MCF 10A (cell line): ENCODE measurements at regions of chr4 and their contacts with region 1.

Region 1: DNA sequence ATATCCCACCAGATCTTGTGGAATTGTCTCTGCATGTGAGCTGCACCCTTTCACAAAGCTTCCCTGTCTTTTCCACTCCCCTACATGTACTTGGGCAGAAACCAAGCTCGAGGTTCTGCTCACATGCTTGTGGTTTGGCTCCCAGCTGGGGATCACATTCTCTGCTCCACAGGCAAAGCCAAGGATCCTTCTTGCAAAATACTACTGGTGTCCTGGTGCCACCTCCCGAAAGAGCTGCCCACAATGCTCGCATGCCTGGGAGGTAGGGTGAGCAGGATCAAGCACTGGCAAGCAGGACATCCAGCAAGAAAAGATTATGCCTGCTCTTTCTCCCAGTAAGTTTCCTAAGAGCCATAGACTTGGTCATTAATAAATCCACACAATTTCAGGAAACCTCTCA is 45.1 kb upstream of the PPARGC1A start:
- DNase-seq: peak; percentile 96
- H3K4me3 Mint-ChIP-seq: peak overlapping the region; percentile 46
- H3K27ac Mint-ChIP-seq: peak overlapping the region; percentile 57
- H3K4me1 Mint-ChIP-seq: peaks cover 57% of the 10 kb centered on the region
- H3K27me3 Mint-ChIP-seq: no peaks in the 10 kb centered on the region
- CTCF ChIP-seq: no peak

Region 2: GRCh38 chr4:23717528-23718248 is 217.2 kb before region 1 on chr4:
- CTCF ChIA-PET with region 1: no interaction called
- POLR2A ChIA-PET with region 1: no interaction called
- intact Hi-C with region 1: no loop called
- DNase-seq: peak; percentile 34
- H3K4me3 Mint-ChIP-seq: no peak overlapping the region
- H3K27ac Mint-ChIP-seq: no peak overlapping the region
- H3K4me1 Mint-ChIP-seq: no peaks in the 10 kb centered on the region
- H3K27me3 Mint-ChIP-seq: no peaks in the 10 kb centered on the region
- CTCF ChIP-seq: peak; percentile 23

Region 3: GRCh38 chr4:23857367-23857959 is 77.5 kb before region 1 on chr4:
- CTCF ChIA-PET with region 1: interaction called, 11 read pairs
- POLR2A ChIA-PET with region 1: interaction called, 5 read pairs
- intact Hi-C with region 1: loop called (anchors 2 kb)
- DNase-seq: peak; percentile 24
- H3K4me3 Mint-ChIP-seq: no peak overlapping the region
- H3K27ac Mint-ChIP-seq: no peak overlapping the region
- H3K4me1 Mint-ChIP-seq: peaks cover 13% of the 10 kb centered on the region
- H3K27me3 Mint-ChIP-seq: no peaks in the 10 kb centered on the region
- CTCF ChIP-seq: no peak

Region 4: DNA sequence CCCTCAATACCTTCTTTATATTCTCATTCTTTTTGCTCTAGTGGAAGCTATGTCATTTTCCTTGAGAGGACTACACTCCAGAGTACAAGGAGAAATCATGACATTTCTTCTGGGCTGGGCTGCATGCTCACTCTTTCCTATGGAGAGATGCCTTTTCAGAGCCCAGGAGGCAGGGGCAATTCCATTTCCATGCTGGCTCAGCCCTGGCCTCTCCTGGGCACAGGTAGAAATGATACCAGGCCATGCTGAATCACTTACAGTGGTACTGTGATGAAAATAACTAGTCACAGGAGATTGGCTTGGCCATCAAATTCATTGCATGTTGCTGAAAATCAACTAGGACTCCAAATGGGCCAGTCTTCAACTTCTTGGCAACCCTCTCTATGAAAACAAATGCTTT is 11.1 kb before region 1 on chr4:
- CTCF ChIA-PET with region 1: interaction called, 10 read pairs
- POLR2A ChIA-PET with region 1: interaction called, 3 read pairs
- intact Hi-C with region 1: no loop called
- DNase-seq: no peak
- H3K4me3 Mint-ChIP-seq: no peak overlapping the region
- H3K27ac Mint-ChIP-seq: no peak overlapping the region
- H3K4me1 Mint-ChIP-seq: peaks cover 14% of the 10 kb centered on the region
- H3K27me3 Mint-ChIP-seq: no peaks in the 10 kb centered on the region
- CTCF ChIP-seq: no peak

Region 5: DNA sequence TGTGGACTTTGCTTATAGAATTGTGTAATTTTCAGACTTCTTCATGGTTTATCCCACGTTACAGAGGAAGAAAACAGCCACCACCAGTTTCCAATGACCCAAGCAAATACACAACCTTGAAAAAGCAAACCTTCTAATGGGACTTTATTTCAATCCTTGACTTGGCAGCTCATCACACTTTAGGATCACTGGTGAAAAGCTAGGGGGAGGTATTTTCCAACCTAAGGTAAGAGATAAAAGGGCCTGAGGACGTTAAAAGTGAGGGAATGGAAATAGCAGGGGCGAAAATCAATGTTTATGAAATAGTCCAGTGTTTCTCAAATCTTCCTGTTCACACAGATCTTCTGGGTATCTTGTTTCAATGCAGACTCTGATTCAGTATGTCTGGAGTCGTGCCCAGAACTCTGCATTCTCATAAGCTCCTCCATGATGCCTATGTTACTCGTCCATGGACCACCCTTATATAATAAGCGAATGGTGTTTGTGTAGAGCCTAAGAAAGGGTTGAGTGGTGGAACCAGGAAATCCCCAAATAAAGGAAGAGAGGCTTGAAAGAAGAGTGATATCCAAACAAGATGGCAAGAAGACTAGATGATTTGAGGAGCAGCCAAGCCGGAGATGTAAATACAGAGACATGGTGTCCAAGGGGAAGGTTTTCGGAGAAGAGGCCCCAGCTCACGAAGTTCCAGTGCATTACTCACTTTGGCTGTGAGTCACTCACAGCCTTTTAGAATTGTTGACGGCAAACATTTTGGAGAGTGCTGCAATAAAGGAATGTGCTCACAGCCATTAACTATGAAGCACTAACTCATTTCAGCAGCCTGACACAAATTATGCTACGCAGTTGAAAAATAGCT is 170.5 kb after region 1 on chr4:
- CTCF ChIA-PET with region 1: interaction called, 8 read pairs
- POLR2A ChIA-PET with region 1: interaction called, 6 read pairs
- intact Hi-C with region 1: loop called (anchors 1 kb)
- DNase-seq: peak; percentile 96
- H3K4me3 Mint-ChIP-seq: peak overlapping the region; percentile 51
- H3K27ac Mint-ChIP-seq: peak overlapping the region; percentile 98
- H3K4me1 Mint-ChIP-seq: peaks cover 26% of the 10 kb centered on the region
- H3K27me3 Mint-ChIP-seq: no peaks in the 10 kb centered on the region
- CTCF ChIP-seq: no peak